A549 (cell line): ENCODE measurements at regions of chr17 and their contacts with region 1.

Region 1: DNA sequence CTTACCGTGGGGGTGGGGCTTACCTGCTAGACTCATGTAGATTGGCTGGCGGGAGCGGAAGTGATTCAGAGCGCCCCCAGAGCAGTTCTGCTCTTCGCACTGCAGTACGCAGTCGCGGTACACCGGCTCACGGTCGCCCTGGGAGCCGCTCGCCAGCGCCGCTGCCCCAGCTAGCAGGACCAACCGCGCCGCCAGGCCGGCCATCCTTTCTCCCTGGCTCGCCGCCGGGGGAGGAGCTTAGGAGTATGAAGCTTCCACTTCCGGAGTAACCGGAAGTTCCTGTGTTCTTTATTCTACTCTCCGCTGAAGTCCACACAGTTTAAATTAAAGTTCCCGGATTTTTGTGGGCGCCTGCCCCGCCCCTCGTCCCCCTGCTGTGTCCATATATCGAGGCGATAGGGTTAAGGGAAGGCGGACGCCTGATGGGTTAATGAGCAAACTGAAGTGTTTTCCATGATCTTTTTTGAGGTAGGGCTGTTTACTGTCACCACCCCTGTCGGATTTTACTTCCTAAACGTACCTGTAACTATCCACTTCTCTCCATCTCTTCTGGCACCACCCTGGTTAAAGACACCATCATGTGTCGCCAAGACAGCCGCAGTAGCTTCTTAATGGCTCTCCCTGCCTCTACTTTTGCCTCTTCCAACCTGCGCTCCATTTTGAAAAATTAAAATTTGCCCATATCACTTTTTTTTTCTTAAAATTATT is at the start of gene PGAP3:
- DNase-seq: peak; percentile 96 to 99
- ATAC-seq: peak; percentile 96 to 97
- H3K4me3 ChIP-seq: peak within 1 kb of the TSS; percentile 61
- H3K27ac ChIP-seq: peak within 1 kb of the TSS; percentile 80 to 92
- H3K4me1 ChIP-seq: peaks cover 7% of the 10 kb centered on the region
- CTCF ChIP-seq: 0 out of 3 replicates have a peak, but pooled peaks have one; percentile 5
- EP300 ChIP-seq: no peak
- POLR2A ChIP-seq: peak; percentile 66
- RAD21 ChIP-seq: no peak; a peak in 1 of 5 replicates
- polyA plus RNA-seq, gene PGAP3: 8.5 and 10.6 TPM in 2 replicates

Region 2: GRCh38 chr17:39636927-39637736 is 50.8 kb before region 1 on chr17 and contains the start of gene STARD3:
- CTCF ChIA-PET with region 1: interaction called, 1,391 read pairs
- POLR2A ChIA-PET with region 1: no interaction called
- DNase-seq: peak; percentile 92 to 97
- ATAC-seq: peak; percentile 82 to 94
- H3K4me3 ChIP-seq: peak within 1 kb of the TSS; percentile 82
- H3K27ac ChIP-seq: peak within 1 kb of the TSS; percentile 87 to 93
- H3K4me1 ChIP-seq: peaks cover 29% of the 10 kb centered on the region
- CTCF ChIP-seq: 0 out of 3 replicates have a peak, but pooled peaks have one; percentile 18
- EP300 ChIP-seq: no peak
- POLR2A ChIP-seq: peak; percentile 75
- RAD21 ChIP-seq: no peak
- polyA plus RNA-seq, gene STARD3: 56.0 and 60.9 TPM in 2 replicates

Region 3: GRCh38 chr17:39668199-39668966 is 19.6 kb before region 1 on chr17 and contains the start of gene PNMT:
- CTCF ChIA-PET with region 1: interaction called, 236 read pairs
- POLR2A ChIA-PET with region 1: interaction called, 5 read pairs
- DNase-seq: peak; percentile 78 to 84
- ATAC-seq: peak; percentile 30 to 52; a peak in 5 of 6 replicates
- H3K4me3 ChIP-seq: peak within 1 kb of the TSS; percentile 38
- H3K27ac ChIP-seq: peak within 1 kb of the TSS; percentile 74 to 89; a peak in 5 of 6 replicates
- H3K4me1 ChIP-seq: peaks cover 48% of the 10 kb centered on the region
- CTCF ChIP-seq: peak; percentile 68
- EP300 ChIP-seq: no peak
- POLR2A ChIP-seq: no peak
- RAD21 ChIP-seq: peak; percentile 43 to 49
- polyA plus RNA-seq, gene PNMT: not detected in 2 replicates